ENCODE measurements at regions of chr6 and their contacts with region 1.

Region 1: DNA sequence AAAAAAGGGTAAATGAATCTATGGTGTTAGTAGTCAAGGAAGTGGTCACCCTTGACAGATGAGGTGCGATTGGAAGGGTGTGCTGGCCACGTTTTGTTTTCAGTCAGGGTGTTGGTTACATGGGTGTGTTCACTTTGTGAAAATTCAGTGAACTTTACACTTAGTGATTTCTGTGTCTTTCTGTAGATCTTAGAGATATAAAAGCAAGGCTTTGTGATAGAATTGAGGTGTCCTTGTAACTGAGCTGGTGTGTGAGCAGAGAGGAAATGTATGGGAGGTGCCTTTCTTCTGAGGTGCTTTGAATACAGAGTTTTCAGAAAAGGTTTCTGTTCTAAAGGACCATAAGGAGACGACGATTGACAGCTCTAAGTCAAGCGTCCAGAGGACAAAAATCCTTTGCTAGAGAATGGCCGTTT is 90.5 kb downstream of the SAMD3 start:
- DNase-seq: no peak

Region 2: GRCh38 chr6:129029778-129030177 is 1102.5 kb before region 1 on chr6:
- intact Hi-C with region 1: loop called in 1 of 2 experiments (anchors 5 kb)
- DNase-seq: no peak